Esophagus muscularis mucosa (tissue), 4 donors: ENCODE measurements at regions of chr17 and their contacts with region 1.

Region 1: GRCh38 chr17:76005263-76006149 is 4.9 kb downstream of the CDK3 start:
- DNase-seq: peak; percentile 96
- H3K4me3 ChIP-seq: no peak overlapping the region
- H3K27ac ChIP-seq: no peak overlapping the region
- H3K4me1 ChIP-seq: peaks cover 0 to 11% (median 5%) of the 10 kb centered on the region in 4 donors
- H3K27me3 ChIP-seq: no peaks in the 10 kb centered on the region
- CTCF ChIP-seq: peak; percentile 63 to 68 (median 67)
- EP300 ChIP-seq: no peak
- POLR2A ChIP-seq: no peak

Region 2: GRCh38 chr17:75904749-75905521 is 100.6 kb before region 1 on chr17 and contains the start of gene MRPL38:
- intact Hi-C with region 1: loop called (anchors 2 kb)
- DNase-seq: peak; percentile 97
- H3K4me3 ChIP-seq: peak within 1 kb of the TSS; percentile 74 to 96 (median 88)
- H3K27ac ChIP-seq: peak within 1 kb of the TSS; percentile 90 to 93 (median 92)
- H3K4me1 ChIP-seq: peaks cover 12 to 28% (median 24%) of the 10 kb centered on the region in 4 donors
- H3K27me3 ChIP-seq: no peaks in the 10 kb centered on the region
- CTCF ChIP-seq: peak; percentile 98 to 99 (median 99)
- EP300 ChIP-seq: no peak
- POLR2A ChIP-seq: peak; percentile 58
- total RNA-seq, gene MRPL38: 32.5 to 61.7 (median 44.1) TPM